Mammary epithelial cell (primary cell): ENCODE measurements at regions of chr6 and their contacts with region 1.

Region 1: GRCh38 chr6:33882154-33882553 is 78.4 kb upstream of the MLN start:
- DNase-seq: no peak
- H3K4me3 ChIP-seq: no peak overlapping the region
- H3K27ac ChIP-seq: no peak overlapping the region
- H3K4me1 ChIP-seq: peaks cover 9% of the 10 kb centered on the region
- H3K27me3 ChIP-seq: no peaks in the 10 kb centered on the region
- CTCF ChIP-seq: no peak

Region 2: DNA sequence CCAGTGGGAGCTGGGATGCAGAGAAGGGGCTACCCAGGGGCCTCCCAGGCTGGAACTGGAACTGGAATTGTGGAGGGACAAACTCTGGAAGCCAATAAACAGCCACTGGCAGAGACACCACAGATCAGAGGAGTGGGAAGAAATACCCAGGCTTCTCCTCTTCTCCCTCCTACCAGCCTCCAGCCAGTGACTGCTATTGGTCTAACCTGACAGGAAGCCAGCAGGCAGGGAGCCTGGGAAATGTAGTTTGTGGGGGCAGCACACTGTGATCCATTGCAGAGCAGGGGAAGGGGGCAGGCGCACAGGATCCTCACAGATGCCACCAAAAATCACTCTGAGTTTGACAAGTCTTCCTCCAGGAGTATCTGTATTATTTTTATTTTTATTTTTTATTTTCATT is 66.3 kb before region 1 on chr6:
- CTCF ChIA-PET with region 1: no interaction called
- dilution Hi-C with region 1: loop called (anchors 5 kb)
- in situ Hi-C with region 1: no loop called
- intact Hi-C with region 1: no loop called
- DNase-seq: no peak
- H3K4me3 ChIP-seq: no peak overlapping the region
- H3K27ac ChIP-seq: no peak overlapping the region
- H3K4me1 ChIP-seq: no peaks in the 10 kb centered on the region
- H3K27me3 ChIP-seq: no peaks in the 10 kb centered on the region
- CTCF ChIP-seq: no peak

Region 3: DNA sequence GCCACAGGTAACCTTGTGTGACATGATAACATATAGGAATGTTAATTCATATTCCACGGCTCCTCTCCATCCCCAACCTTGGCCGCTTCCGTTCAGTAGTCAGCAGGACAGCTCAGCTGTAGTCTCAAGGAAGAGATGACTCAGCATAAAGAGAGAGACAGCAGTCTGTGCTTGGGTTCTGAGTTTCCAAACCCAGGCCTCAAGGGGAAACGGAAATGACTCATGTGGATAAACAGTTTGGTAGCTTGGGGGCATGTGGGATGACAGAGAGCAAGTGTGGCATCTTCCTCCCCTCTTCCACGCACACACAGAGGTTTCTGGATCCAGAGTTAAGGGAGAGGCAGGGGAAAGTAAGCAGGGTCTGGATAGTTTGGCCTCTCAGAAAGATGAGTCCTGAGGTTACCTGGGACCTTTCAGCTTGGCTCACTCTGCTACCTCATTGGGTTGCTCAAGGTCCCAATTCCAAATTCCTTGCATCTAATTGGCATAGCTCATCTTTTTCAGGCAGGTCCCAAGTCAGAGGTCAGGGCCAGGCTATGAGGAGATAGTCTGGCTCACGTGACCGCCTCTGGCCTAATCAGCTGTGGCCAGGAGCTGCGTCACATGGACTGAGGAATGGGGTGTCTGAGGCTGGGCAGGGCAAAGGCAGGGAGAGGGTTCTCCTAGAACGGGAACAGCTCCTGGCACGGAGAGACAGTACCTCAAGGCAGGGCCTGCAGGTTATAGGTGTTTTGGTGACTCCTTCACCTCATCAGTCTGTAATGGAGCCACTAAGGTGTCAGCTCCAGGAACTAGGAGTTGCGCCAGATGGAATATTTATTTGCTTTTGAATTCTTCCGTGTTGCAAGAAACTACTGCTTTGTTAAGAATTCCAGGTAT is 41.9 kb before region 1 on chr6:
- CTCF ChIA-PET with region 1: no interaction called
- dilution Hi-C with region 1: no loop called
- in situ Hi-C with region 1: no loop called
- intact Hi-C with region 1: no loop called
- DNase-seq: peak; percentile 97
- H3K4me3 ChIP-seq: no peak overlapping the region
- H3K27ac ChIP-seq: peak overlapping the region; percentile 80
- H3K4me1 ChIP-seq: peaks cover 44% of the 10 kb centered on the region
- H3K27me3 ChIP-seq: no peaks in the 10 kb centered on the region
- CTCF ChIP-seq: no peak

Region 4: GRCh38 chr6:33949877-33950435 is 67.8 kb after region 1 on chr6:
- CTCF ChIA-PET with region 1: no interaction called
- dilution Hi-C with region 1: loop called (anchors 5 kb)
- in situ Hi-C with region 1: no loop called
- intact Hi-C with region 1: no loop called
- DNase-seq: no peak
- H3K4me3 ChIP-seq: no peak overlapping the region
- H3K27ac ChIP-seq: no peak overlapping the region
- H3K4me1 ChIP-seq: no peaks in the 10 kb centered on the region
- H3K27me3 ChIP-seq: no peaks in the 10 kb centered on the region
- CTCF ChIP-seq: no peak